ENCODE measurements at regions of chr11 and their contacts with region 1.

Region 1: GRCh38 chr11:87352759-87353707 is 315.3 kb downstream of the TMEM135 start:
- DNase-seq: peak; percentile 80 to 95 (median 87)
- H3K4me3 ChIP-seq: peak overlapping the region in 1 of 3 donors; percentile 13
- H3K27ac ChIP-seq: no peak overlapping the region
- H3K4me1 ChIP-seq: peaks cover 0 to 6% (median 0%) of the 10 kb centered on the region in 3 donors
- H3K27me3 ChIP-seq: no peaks in the 10 kb centered on the region
- CTCF ChIP-seq: peak; percentile 100

Region 2: DNA sequence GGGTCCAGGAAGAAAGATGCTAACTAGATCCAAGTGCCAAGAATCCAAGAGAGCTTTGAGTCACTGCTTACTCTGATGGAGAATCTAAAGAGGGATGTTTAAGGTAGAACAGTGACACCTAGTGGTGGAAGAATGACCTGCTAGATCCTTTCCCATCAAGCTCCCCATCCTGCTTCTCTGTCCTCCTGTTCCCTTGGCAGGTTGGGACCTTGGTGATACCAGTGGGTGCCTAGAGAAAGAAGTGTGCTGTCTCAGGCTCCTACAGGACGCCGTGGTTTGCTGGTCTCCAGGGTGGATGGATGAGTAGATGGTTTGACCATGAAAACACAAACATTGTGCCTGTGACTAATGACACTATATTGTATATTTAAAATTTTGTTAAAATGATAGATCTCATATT is 68.4 kb after region 1 on chr11:
- intact Hi-C with region 1: loop called (anchors 5 kb)
- DNase-seq: peak in 3 of 5 donors; percentile 56 to 87 (median 82)
- H3K4me3 ChIP-seq: no peak overlapping the region
- H3K27ac ChIP-seq: no peak overlapping the region
- H3K4me1 ChIP-seq: peaks cover 0 to 2% (median 0%) of the 10 kb centered on the region in 3 donors
- H3K27me3 ChIP-seq: no peaks in the 10 kb centered on the region
- CTCF ChIP-seq: peak; percentile 75

Region 3: GRCh38 chr11:87754685-87755084 is 401.7 kb after region 1 on chr11:
- intact Hi-C with region 1: no loop called
- DNase-seq: no peak
- H3K4me3 ChIP-seq: no peak overlapping the region
- H3K27ac ChIP-seq: no peak overlapping the region
- H3K4me1 ChIP-seq: no peaks in the 10 kb centered on the region
- H3K27me3 ChIP-seq: no peaks in the 10 kb centered on the region
- CTCF ChIP-seq: no peak

Measured in kidney (tissue), 22 donors.